GM12878 (cell line): ENCODE measurements at regions of chr10 and their contacts with region 1.

Region 1: DNA sequence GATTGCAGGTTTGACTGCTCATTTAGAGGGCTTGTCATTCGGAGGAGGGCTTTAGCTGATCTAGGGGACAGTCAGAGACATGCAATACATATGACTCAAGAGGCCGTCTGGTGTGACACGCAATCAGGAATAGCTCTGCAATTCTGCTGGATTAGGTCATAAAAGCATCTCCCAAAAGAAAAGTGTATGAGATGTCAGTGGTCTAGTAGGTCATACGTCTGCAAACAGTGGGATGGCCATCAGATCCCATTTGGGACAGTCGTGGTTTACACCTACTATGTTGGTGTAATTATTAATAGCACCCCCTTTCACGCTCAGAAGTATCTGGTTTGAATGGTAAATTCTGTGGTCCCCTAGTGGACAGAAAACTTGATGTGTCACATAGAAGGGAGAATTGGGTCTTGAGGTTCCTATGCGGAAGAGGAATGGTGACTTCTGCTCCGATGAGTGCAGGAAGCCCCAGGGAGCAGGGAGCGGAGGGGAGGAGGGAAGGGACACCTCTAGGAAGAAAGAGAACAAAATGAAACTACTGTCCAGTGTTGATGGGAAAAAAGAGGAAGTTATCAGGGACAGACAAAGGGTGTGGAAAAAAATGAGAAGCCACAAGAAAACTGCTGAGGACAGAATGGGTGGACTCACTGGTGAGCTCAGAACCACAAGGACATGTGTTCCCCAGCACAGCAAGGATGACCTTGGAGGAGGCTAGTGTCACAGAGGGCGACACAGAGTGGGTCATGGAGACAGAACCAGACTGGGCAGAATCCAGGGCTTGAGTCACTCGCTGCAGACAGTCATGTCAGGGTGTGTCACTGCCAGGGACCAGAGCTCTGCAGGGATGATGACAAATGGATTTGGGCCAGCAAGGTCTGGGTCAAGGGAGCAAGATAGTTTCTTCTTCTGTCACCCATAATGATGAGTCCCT is 59.9 kb downstream of the MAP3K8 start:
- DNase-seq: no peak
- ATAC-seq: peak; percentile 63
- H3K4me3 ChIP-seq: peak overlapping the region; percentile 40; the same call in 1 of the 2 replicates
- H3K27ac ChIP-seq: peak overlapping the region; percentile 87
- H3K4me1 ChIP-seq: peaks cover 88% of the 10 kb centered on the region
- H3K27me3 ChIP-seq: no peaks in the 10 kb centered on the region
- CTCF ChIP-seq: peak; percentile 20 to 45 (median 37); a peak in 5 of 6 replicates
- EP300 ChIP-seq: peak; percentile 35 to 80; a peak in 1 of 4 replicates
- POLR2A ChIP-seq: no peak
- RAD21 ChIP-seq: peak; percentile 37; the same call in 1 of the 2 replicates

Region 2: GRCh38 chr10:30413996-30414576 is 79.8 kb before region 1 on chr10:
- CTCF ChIA-PET with region 1: interaction called, 6 read pairs
- POLR2A ChIA-PET with region 1: interaction called, 8 read pairs
- RAD21 ChIA-PET with region 1: interaction called, 32 read pairs
- SMC1A ChIA-PET with region 1: interaction called, 25 read pairs
- in situ Hi-C with region 1: no loop called
- intact Hi-C with region 1: loop called (anchors 5 kb)
- DNase-seq: no peak
- ATAC-seq: peak; percentile 71
- H3K4me3 ChIP-seq: no peak overlapping the region
- H3K27ac ChIP-seq: no peak overlapping the region
- H3K4me1 ChIP-seq: peaks cover 28% of the 10 kb centered on the region
- H3K27me3 ChIP-seq: no peaks in the 10 kb centered on the region
- CTCF ChIP-seq: peak; percentile 78 to 87 (median 84)
- EP300 ChIP-seq: no peak
- POLR2A ChIP-seq: no peak
- RAD21 ChIP-seq: peak; percentile 97

Region 3: GRCh38 chr10:30442019-30442606 is 51.8 kb before region 1 on chr10:
- CTCF ChIA-PET with region 1: interaction called, 8 read pairs
- POLR2A ChIA-PET with region 1: interaction called, 10 read pairs
- RAD21 ChIA-PET with region 1: interaction called, 22 read pairs
- SMC1A ChIA-PET with region 1: interaction called, 51 read pairs
- in situ Hi-C with region 1: no loop called
- intact Hi-C with region 1: loop called (anchors 5 kb)
- DNase-seq: no peak
- ATAC-seq: peak; percentile 13
- H3K4me3 ChIP-seq: peak overlapping the region; percentile 13; the same call in 1 of the 2 replicates
- H3K27ac ChIP-seq: no peak overlapping the region
- H3K4me1 ChIP-seq: peaks cover 16% of the 10 kb centered on the region
- H3K27me3 ChIP-seq: no peaks in the 10 kb centered on the region
- CTCF ChIP-seq: no peak
- EP300 ChIP-seq: no peak
- POLR2A ChIP-seq: peak; percentile 61
- RAD21 ChIP-seq: no peak

Region 4: GRCh38 chr10:30467651-30468338 is 26.1 kb before region 1 on chr10:
- CTCF ChIA-PET with region 1: interaction called, 3 read pairs
- POLR2A ChIA-PET with region 1: interaction called, 11 read pairs
- RAD21 ChIA-PET with region 1: interaction called, 10 read pairs
- SMC1A ChIA-PET with region 1: interaction called, 8 read pairs
- in situ Hi-C with region 1: no loop called
- intact Hi-C with region 1: no loop called
- DNase-seq: no peak
- ATAC-seq: peak; percentile 94
- H3K4me3 ChIP-seq: no peak overlapping the region
- H3K27ac ChIP-seq: peak overlapping the region; percentile 62
- H3K4me1 ChIP-seq: peaks cover 11% of the 10 kb centered on the region
- H3K27me3 ChIP-seq: no peaks in the 10 kb centered on the region
- CTCF ChIP-seq: no peak
- EP300 ChIP-seq: no peak
- POLR2A ChIP-seq: no peak
- RAD21 ChIP-seq: no peak

Region 5: DNA sequence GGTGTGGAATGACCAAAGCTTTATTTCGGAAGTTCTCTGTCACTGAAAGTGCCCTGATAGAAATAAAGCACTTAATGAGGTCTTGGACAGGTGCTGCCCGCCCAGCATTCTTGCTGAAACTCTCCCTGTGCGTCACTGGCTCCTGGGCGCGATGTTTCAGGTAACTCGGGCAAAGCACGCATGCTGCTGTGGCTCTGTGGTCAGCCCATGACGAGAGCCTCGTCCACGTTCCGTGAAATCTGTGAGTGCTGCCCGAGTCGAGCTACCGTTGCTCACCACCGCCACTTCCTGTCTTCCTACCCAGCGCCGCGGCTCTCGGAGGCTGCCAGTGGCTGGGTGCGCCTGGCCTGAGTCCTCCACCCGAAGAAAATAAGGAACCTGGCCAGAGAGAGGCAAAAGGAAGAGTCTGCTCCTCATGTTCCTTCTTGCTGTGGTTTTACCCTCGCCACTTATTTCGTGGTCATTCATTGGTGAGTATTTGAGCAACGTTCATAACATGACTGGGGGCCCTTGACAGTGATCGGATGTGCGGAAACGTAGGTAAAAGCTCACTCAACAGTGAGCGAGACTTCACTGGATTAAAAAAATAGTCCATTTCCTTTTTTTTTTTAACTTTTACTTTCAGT is 35.6 kb after region 1 on chr10:
- CTCF ChIA-PET with region 1: interaction called, 41 read pairs
- POLR2A ChIA-PET with region 1: interaction called, 7 read pairs
- RAD21 ChIA-PET with region 1: interaction called, 165 read pairs
- SMC1A ChIA-PET with region 1: interaction called, 147 read pairs
- in situ Hi-C with region 1: no loop called
- intact Hi-C with region 1: loop called (anchors 2 kb)
- DNase-seq: peak; percentile 77
- ATAC-seq: peak; percentile 87
- H3K4me3 ChIP-seq: peak overlapping the region; percentile 48
- H3K27ac ChIP-seq: peak overlapping the region; percentile 97
- H3K4me1 ChIP-seq: peaks cover 33% of the 10 kb centered on the region
- H3K27me3 ChIP-seq: no peaks in the 10 kb centered on the region
- CTCF ChIP-seq: no peak
- EP300 ChIP-seq: peak; percentile 97 to 99; a peak in 3 of 4 replicates
- POLR2A ChIP-seq: peak; percentile 88
- RAD21 ChIP-seq: 0 out of 2 replicates have a peak, but pooled peaks have one; percentile 11